ENCODE measurements at regions of chr11 and their contacts with region 1.

Region 1: GRCh38 chr11:18081551-18081950 is 24.3 kb downstream of the SAAL1 start:
- DNase-seq: no peak
- ATAC-seq: no peak
- H3K4me3 ChIP-seq: no peak overlapping the region
- H3K27ac ChIP-seq: no peak overlapping the region
- H3K4me1 ChIP-seq: no peaks in the 10 kb centered on the region
- H3K27me3 ChIP-seq: no peaks in the 10 kb centered on the region
- CTCF ChIP-seq: no peak

Region 2: GRCh38 chr11:18304745-18305144 is 223.2 kb after region 1 on chr11:
- intact Hi-C with region 1: loop called in 1 of 2 experiments (anchors 10 kb)
- DNase-seq: no peak
- ATAC-seq: no peak
- H3K4me3 ChIP-seq: no peak overlapping the region
- H3K27ac ChIP-seq: no peak overlapping the region
- H3K4me1 ChIP-seq: no peaks in the 10 kb centered on the region
- H3K27me3 ChIP-seq: no peaks in the 10 kb centered on the region
- CTCF ChIP-seq: no peak

Measured in psoas muscle (tissue), 8 donors.